CD4-positive, alpha-beta memory T cell (primary cell): ENCODE measurements at regions of chr2 and their contacts with region 1.

Region 1: DNA sequence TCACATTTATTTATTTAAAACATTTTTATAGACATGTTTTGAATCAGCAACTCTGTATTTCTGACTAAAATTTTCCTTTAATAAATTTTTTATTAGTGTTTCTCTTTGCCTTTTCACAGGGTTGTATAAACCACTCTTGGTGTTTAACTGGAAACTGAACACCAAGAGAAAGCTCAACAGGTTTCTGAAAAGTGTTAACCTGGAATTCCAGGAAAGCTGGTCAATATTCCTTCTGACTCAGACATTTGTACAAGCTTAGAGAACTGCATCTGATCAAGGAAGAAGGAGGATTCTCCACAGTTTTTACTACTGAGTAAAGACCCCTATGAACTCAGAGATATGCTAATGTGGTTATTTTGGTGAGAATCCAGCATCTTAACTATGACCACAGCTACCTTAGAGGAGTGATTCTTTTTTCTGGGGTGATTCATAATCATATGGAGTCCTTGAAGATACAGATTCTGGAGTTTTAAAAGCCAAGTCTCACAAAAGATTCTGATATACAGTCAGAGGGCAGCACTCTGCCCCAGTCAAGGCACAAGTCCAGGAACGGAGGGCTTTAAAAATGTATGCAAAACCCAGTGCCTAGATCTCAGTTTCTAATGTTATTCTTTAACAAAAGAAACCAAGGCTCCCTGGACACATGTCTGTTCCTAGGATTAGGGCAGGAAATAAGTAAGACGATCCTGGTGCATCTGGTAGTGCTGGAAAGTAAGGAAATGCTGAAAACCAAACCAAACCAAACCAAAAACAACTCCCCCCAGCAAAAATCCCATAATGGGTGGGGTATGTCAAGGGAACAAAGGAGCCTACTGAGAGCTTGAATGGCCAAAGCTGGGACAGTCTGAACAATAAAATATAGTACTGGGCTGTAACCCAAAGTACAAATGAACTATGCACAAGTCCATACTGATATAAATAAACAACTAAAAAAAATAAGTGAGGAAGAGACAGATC is 85.1 kb upstream of the FZD5 start:
- DNase-seq: no peak
- H3K4me3 ChIP-seq: no peak overlapping the region
- H3K4me3 Mint-ChIP-seq: no peak overlapping the region
- H3K27ac ChIP-seq: no peak overlapping the region
- H3K27ac Mint-ChIP-seq: no peak overlapping the region
- H3K4me1 ChIP-seq: no peaks in the 10 kb centered on the region
- H3K4me1 Mint-ChIP-seq: no peaks in the 10 kb centered on the region
- H3K27me3 ChIP-seq: no peaks in the 10 kb centered on the region
- H3K27me3 Mint-ChIP-seq: no peaks in the 10 kb centered on the region

Region 2: GRCh38 chr2:207902821-207903220 is 48.1 kb after region 1 on chr2:
- CTCF ChIA-PET with region 1: no interaction called
- POLR2A ChIA-PET with region 1: no interaction called
- intact Hi-C with region 1: loop called (anchors 1 kb)
- DNase-seq: no peak
- H3K4me3 ChIP-seq: no peak overlapping the region
- H3K4me3 Mint-ChIP-seq: no peak overlapping the region
- H3K27ac ChIP-seq: no peak overlapping the region
- H3K27ac Mint-ChIP-seq: no peak overlapping the region
- H3K4me1 ChIP-seq: no peaks in the 10 kb centered on the region
- H3K4me1 Mint-ChIP-seq: peaks cover 0 to 2% (median 0%) of the 10 kb centered on the region in 4 donors
- H3K27me3 ChIP-seq: no peaks in the 10 kb centered on the region
- H3K27me3 Mint-ChIP-seq: no peaks in the 10 kb centered on the region

Region 3: GRCh38 chr2:207914716-207915115 is 60.0 kb after region 1 on chr2:
- CTCF ChIA-PET with region 1: no interaction called
- POLR2A ChIA-PET with region 1: no interaction called
- intact Hi-C with region 1: no loop called
- DNase-seq: no peak
- H3K4me3 ChIP-seq: no peak overlapping the region
- H3K4me3 Mint-ChIP-seq: no peak overlapping the region
- H3K27ac ChIP-seq: no peak overlapping the region
- H3K27ac Mint-ChIP-seq: no peak overlapping the region
- H3K4me1 ChIP-seq: no peaks in the 10 kb centered on the region
- H3K4me1 Mint-ChIP-seq: peaks cover 0 to 2% (median 0%) of the 10 kb centered on the region in 4 donors
- H3K27me3 ChIP-seq: no peaks in the 10 kb centered on the region
- H3K27me3 Mint-ChIP-seq: no peaks in the 10 kb centered on the region

Region 4: GRCh38 chr2:208074610-208075356 is 220.0 kb after region 1 on chr2:
- CTCF ChIA-PET with region 1: no interaction called
- POLR2A ChIA-PET with region 1: no interaction called
- intact Hi-C with region 1: no loop called
- DNase-seq: no peak
- H3K4me3 ChIP-seq: no peak overlapping the region
- H3K4me3 Mint-ChIP-seq: no peak overlapping the region
- H3K27ac ChIP-seq: no peak overlapping the region
- H3K27ac Mint-ChIP-seq: no peak overlapping the region
- H3K4me1 ChIP-seq: no peaks in the 10 kb centered on the region
- H3K4me1 Mint-ChIP-seq: no peaks in the 10 kb centered on the region
- H3K27me3 ChIP-seq: peaks cover 4% of the 10 kb centered on the region
- H3K27me3 Mint-ChIP-seq: peaks cover 19 to 34% of the 10 kb centered on the region in 2 donors